ENCODE measurements at regions of chr1 and their contacts with region 1.

Region 1: GRCh38 chr1:46425726-46426125 is 31.6 kb downstream of the FAAH start:
- DNase-seq: no peak
- H3K4me3 ChIP-seq: no peak overlapping the region
- H3K4me3 Mint-ChIP-seq: peak overlapping the region in 6 of 8 donors; percentile 3 to 67 (median 36)
- H3K27ac ChIP-seq: no peak overlapping the region
- H3K27ac Mint-ChIP-seq: peak overlapping the region in 3 of 7 donors; percentile 10 to 85 (median 81)
- H3K4me1 ChIP-seq: peaks cover 27% of the 10 kb centered on the region
- H3K4me1 Mint-ChIP-seq: peaks cover 0 to 33% (median 17%) of the 10 kb centered on the region in 4 donors
- H3K27me3 ChIP-seq: no peaks in the 10 kb centered on the region
- H3K27me3 Mint-ChIP-seq: peaks cover 11 to 24% of the 10 kb centered on the region in 2 donors

Region 2: DNA sequence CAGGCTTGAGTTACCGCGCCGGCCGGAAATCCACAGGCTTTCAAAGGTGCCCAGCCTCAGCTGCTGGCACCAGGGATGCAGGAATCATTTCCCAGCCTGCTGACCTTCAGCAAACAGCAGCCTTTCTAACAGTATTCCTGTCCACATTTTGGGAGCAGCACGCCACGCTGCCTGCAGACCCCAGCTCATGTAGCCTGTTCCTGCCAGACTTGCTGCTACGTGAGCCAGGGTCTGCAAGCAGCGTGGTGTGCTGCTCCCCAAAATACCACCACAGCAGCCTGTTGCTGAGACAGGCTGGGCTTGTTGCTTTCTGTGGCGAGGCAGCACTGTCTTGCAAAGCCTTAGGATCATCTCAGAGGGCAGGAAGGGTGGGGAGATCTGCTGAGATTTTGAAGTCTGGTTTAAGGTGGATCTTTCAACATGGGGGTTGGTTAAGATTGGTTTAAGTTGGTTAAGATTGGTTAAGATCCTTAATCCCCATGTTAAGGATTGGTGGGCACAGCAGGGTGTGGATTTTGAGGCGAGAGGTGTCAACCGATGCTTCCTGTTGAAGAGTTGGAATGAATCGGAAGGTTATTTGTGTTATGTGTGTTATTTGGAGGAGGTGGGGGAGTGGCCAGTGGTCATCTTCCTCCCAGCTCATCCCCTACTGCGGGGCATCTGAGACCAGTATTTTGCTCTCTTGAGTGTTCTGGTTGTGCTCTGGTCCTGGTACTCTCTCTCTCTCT is 18.7 kb before region 1 on chr1:
- CTCF ChIA-PET with region 1: interaction called, 11 read pairs
- POLR2A ChIA-PET with region 1: interaction called, 5 read pairs
- intact Hi-C with region 1: no loop called
- DNase-seq: no peak
- H3K4me3 ChIP-seq: no peak overlapping the region
- H3K4me3 Mint-ChIP-seq: peak overlapping the region in 3 of 8 donors; percentile 38 to 58 (median 41)
- H3K27ac ChIP-seq: no peak overlapping the region
- H3K27ac Mint-ChIP-seq: peak overlapping the region in 6 of 7 donors; percentile 9 to 79 (median 60)
- H3K4me1 ChIP-seq: peaks cover 16% of the 10 kb centered on the region
- H3K4me1 Mint-ChIP-seq: peaks cover 4 to 8% (median 7%) of the 10 kb centered on the region in 4 donors
- H3K27me3 ChIP-seq: no peaks in the 10 kb centered on the region
- H3K27me3 Mint-ChIP-seq: no peaks in the 10 kb centered on the region

Region 3: GRCh38 chr1:46413596-46413985 is 12.1 kb before region 1 on chr1:
- CTCF ChIA-PET with region 1: interaction called, 15 read pairs
- POLR2A ChIA-PET with region 1: interaction called, 45 read pairs
- intact Hi-C with region 1: no loop called
- DNase-seq: peak; percentile 36 to 79 (median 46)
- H3K4me3 ChIP-seq: no peak overlapping the region
- H3K4me3 Mint-ChIP-seq: peak overlapping the region in 1 of 8 donors; percentile 24
- H3K27ac ChIP-seq: no peak overlapping the region
- H3K27ac Mint-ChIP-seq: peak overlapping the region in 6 of 7 donors; percentile 22 to 94 (median 85)
- H3K4me1 ChIP-seq: peaks cover 23% of the 10 kb centered on the region
- H3K4me1 Mint-ChIP-seq: peaks cover 0 to 32% (median 17%) of the 10 kb centered on the region in 4 donors
- H3K27me3 ChIP-seq: no peaks in the 10 kb centered on the region
- H3K27me3 Mint-ChIP-seq: no peaks in the 10 kb centered on the region